HEK293T (cell line): ENCODE measurements at regions of chr14 and their contacts with region 1.

Region 1: GRCh38 chr14:73568381-73568781 is 632 bp upstream of the ACOT2 start:
- DNase-seq: no peak

Region 2: DNA sequence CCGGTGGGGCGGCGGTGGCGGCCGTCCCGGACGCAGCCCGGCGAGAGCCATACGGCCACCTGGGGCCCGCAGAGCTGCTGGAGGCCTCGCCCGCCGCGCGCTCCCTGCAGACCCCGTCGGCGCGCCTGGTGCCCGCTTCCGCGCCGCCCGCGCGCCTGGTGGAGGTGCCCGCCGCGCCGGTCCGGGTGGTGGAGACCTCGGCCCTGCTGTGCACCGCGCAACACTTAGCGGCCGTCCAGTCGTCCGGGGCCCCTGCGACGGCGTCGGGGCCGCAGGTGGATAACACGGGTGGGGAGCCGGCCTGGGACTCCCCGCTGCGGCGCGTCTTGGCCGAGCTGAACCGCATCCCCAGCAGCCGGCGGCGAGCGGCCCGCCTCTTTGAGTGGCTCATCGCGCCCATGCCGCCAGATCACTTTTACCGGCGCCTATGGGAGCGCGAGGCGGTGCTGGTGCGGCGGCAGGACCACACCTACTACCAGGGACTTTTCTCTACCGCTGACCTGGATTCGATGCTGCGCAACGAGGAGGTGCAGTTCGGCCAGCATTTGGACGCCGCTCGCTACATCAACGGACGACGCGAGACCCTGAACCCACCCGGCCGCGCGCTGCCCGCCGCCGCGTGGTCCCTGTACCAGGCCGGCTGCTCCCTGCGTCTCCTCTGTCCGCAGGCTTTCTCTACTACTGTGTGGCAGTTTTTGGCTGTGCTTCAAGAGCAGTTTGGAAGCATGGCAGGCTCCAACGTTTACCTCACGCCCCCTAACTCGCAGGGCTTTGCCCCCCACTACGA is 76.9 kb before region 1 on chr14:
- CTCF ChIA-PET with region 1: no interaction called
- POLR2A ChIA-PET with region 1: interaction called, 10 read pairs
- DNase-seq: no peak

Region 3: DNA sequence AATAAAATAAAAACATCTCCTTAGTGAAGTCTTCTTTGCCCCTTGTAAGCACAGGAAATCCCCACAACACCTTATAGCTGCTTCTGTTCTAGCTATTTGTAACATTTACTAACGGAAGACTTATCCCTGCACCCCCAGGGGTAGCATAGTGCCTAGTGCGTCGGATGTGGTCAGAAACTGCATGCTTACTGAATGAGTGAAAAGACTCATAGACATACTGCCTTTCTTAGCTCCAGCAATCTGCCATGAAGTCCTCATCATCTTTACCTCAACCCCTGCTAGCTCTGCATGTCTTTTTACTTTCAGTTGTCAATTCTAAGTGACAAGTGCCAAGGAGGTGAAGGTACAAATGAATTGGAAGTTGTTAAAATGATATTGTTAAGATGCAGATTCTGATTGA is 64.7 kb before region 1 on chr14:
- CTCF ChIA-PET with region 1: interaction called, 10 read pairs
- POLR2A ChIA-PET with region 1: interaction called, 5 read pairs
- DNase-seq: no peak

Region 4: DNA sequence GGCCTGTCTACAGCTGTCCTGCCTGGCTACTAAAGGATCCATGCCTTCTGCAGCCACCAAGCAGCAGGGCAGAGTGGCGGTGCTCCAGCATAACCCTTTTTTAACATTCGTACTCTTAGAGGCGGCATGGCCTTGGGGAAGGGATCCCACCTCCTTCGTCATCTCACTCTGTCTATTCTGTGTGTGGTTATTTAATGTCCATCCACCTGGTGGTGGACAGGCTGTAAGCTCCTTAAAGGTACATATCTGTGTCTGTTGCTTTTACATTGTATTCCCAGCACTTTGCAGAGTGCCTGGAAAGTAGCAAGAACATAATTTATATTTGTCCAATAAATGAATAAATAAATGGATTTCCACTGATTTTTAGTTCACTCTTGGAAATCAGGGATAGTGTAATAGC is 47.2 kb before region 1 on chr14:
- CTCF ChIA-PET with region 1: no interaction called
- POLR2A ChIA-PET with region 1: interaction called, 10 read pairs
- DNase-seq: no peak

Region 5: GRCh38 chr14:73553845-73554244 is 14.5 kb before region 1 on chr14:
- CTCF ChIA-PET with region 1: no interaction called
- POLR2A ChIA-PET with region 1: no interaction called
- DNase-seq: no peak

Region 6: DNA sequence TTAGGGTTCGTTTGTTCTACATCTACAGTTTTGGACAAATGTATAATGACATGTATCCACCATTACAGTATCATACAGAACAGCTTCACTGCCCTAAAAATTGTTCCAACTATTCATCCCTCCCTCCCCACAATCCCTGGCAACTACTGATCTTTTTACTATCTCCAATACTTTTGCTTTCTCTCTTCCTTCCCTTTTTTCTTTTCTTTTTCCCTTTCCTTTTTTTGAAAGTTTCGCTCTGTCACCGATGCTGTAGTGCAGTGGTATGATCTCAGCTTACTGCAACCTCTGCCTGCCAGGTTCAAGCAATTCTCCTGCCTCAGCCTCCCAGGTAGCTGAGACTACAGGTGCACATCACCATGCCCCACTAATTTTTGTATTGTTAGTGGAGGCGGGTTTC is 20.7 kb after region 1 on chr14:
- CTCF ChIA-PET with region 1: no interaction called
- POLR2A ChIA-PET with region 1: interaction called, 11 read pairs
- DNase-seq: no peak

Region 7: GRCh38 chr14:73613046-73613383 is 44.6 kb after region 1 on chr14:
- CTCF ChIA-PET with region 1: interaction called, 5 read pairs
- POLR2A ChIA-PET with region 1: interaction called, 15 read pairs
- DNase-seq: no peak

Region 8: DNA sequence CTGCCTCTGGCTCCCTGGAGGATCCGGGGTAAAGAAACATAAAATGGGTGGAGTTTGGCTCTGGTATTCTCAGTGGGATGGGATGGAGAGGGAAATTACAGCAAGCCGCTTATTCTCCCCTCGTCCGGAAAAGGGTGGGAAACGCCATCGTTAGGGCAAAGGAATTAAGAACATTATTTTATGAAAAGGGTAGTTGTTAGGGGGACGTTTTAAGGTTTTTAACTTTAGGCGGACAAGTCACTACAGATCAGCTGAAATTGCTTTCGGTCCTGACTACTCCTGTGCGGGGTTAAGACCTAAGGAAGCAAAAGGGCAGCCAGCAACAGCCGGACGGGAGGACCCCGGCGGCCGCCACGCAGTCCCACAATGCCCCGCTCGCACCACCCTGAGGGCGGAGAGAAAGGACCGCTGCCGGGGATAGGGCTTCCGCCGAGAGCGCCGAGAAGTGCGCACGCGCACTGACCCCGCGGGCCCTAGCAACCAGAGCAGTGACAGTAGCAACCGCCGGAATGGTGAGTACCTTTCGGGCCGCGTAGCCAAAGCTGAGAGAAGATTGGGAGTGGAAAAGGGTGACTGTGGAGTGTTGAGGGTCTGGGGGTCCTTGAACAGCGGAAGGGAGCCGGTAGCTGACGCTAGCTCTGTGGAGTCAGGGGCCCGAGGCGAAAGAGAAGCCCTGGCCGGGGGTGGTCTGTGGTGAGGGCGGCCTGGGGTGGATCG is 76.3 kb after region 1 on chr14 and contains the start of gene DNAL1:
- CTCF ChIA-PET with region 1: no interaction called
- POLR2A ChIA-PET with region 1: interaction called, 13 read pairs
- DNase-seq: peak; percentile 97

Region 9: GRCh38 chr14:73661872-73662271 is 93.5 kb after region 1 on chr14:
- CTCF ChIA-PET with region 1: no interaction called
- POLR2A ChIA-PET with region 1: no interaction called
- DNase-seq: no peak